ENCODE measurements at regions of chr6 and their contacts with region 1.

Region 1: DNA sequence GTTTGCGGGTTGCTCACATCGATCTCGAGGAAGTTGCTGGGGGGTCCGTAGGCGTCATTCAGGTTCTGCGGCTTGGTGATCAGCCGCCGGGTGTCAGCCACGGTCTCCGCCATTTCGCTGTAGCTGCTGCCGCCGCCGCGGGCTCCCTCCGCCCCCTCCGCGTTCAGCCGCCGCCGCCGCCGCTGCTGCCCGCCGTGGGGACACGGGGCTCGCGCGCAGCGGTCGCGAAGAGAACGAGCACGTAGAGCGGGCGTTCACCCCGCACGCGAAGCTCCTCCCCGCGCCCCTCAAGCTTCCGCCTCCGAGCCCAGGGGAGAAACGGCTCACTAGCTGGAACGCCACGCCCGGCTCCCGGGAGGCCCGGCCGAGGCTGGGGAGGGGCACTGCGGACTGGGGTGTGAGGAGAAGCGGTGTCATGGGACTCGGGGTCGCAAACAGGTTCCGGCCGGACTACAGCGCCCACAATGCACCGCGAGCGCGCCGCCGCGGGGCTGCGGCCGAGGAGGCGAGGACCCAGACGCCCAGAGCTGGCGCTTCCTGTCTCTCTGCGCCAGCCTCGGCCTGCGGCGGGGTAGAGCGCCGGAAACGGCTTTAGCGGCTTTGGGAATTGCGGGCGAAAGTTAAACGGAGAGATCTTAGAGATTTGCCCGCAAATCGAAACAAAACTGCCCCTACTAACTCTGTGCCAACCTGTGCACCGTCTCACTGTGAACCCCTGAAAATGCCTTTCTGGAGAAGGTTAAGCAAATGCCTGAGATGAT is at the start of gene SNX3:
- DNase-seq: peak; percentile 94
- H3K4me3 Mint-ChIP-seq: peak within 1 kb of the TSS; percentile 79
- H3K27ac Mint-ChIP-seq: peak within 1 kb of the TSS; percentile 88
- H3K4me1 Mint-ChIP-seq: peaks cover 19% of the 10 kb centered on the region
- H3K27me3 Mint-ChIP-seq: no peaks in the 10 kb centered on the region
- total RNA-seq, gene SNX3: 78.6 to 80.4 TPM

Region 2: DNA sequence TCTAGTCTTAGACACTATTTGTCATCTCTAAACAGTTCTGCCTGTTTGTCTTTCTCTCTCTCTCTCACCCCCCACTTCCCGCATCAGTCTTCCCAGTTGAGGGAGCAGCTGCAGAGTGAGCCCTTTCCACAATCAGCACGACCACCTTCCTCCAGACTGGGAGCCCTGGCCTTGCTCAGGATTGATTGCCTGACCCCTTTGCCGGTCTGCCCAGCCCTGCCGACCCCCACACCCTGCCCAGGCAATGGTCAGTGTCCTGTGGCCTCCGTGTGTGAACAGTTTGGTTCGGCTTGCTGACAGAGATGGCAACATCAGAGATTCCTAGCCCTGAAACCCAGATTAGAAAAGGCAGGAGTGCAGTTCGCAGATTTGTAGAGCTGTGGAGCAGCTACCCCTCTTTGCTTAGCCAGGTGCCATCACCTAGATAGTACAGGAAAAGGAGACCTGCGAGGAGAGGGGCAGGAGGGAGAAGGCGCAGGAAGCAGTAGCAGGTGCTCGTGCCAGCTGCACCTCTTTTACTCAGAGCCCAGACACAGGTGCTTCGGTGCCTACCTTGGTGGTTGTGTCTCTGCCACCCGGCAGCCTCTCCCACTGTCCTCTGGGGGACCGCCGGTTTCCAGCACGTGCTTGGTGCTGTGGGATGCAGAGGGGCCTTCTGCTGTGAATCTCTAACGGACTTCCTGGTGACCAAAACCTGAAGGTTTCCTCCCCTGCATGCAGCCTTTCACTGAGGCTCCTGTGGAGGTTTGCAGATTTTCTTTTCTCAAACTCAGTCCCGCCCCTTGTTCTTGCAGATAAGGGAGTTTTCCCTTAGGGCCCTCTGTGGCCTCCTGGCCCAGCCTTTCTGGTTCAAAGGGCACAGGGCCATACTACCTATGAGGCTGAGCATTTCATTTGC is 529.3 kb before region 1 on chr6:
- CTCF ChIA-PET with region 1: no interaction called
- POLR2A ChIA-PET with region 1: no interaction called
- intact Hi-C with region 1: loop called (anchors 10 kb)
- DNase-seq: peak; percentile 47
- H3K4me3 Mint-ChIP-seq: peak overlapping the region; percentile 75
- H3K27ac Mint-ChIP-seq: peak overlapping the region; percentile 74
- H3K4me1 Mint-ChIP-seq: peaks cover 83% of the 10 kb centered on the region
- H3K27me3 Mint-ChIP-seq: no peaks in the 10 kb centered on the region

Region 3: DNA sequence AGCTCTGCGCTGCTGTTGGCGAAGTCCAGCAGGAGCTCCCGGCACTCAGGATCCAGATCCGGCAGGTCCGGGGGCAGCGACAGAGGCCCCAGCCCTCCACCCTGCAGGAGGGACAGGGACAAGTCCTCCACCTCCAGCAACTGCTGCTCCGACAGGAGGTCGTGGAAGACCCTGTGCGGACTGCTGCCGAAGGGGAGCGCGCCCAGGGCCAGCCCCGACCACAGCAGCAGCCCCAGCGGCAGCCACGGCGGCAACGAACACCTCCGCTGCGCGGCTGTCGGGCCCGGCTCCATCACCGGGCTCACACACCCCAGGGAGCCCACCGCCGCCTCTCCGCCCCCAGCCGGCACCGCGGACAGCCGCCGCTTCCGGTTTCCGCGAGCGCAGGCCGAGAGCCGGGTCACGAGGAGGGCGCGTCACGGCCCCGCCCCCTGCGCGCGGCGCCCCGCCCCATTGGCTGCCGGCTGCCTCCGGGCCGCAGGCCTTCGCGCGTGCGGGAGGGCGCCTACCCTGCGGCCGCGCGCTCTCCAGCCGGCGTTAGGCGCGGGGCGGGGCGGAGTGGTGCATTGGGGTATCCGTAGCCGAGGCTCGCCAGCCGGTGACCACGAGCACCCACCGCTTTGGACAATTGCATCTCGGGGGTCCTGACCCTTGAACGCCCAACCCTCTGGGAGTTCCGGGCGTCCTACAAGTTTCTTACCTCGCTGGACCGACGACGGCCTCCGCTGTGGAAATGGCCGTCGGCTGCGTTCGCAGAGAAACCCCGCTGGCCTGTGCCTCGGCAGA is 186.4 kb before region 1 on chr6 and contains the start of gene OSTM1:
- CTCF ChIA-PET with region 1: no interaction called
- POLR2A ChIA-PET with region 1: no interaction called
- intact Hi-C with region 1: loop called (anchors 1 kb)
- DNase-seq: peak; percentile 95
- H3K4me3 Mint-ChIP-seq: peak within 1 kb of the TSS; percentile 80
- H3K27ac Mint-ChIP-seq: peak within 1 kb of the TSS; percentile 65
- H3K4me1 Mint-ChIP-seq: peaks cover 24% of the 10 kb centered on the region
- H3K27me3 Mint-ChIP-seq: no peaks in the 10 kb centered on the region
- total RNA-seq, gene OSTM1: 14.0 to 16.3 TPM

Region 4: DNA sequence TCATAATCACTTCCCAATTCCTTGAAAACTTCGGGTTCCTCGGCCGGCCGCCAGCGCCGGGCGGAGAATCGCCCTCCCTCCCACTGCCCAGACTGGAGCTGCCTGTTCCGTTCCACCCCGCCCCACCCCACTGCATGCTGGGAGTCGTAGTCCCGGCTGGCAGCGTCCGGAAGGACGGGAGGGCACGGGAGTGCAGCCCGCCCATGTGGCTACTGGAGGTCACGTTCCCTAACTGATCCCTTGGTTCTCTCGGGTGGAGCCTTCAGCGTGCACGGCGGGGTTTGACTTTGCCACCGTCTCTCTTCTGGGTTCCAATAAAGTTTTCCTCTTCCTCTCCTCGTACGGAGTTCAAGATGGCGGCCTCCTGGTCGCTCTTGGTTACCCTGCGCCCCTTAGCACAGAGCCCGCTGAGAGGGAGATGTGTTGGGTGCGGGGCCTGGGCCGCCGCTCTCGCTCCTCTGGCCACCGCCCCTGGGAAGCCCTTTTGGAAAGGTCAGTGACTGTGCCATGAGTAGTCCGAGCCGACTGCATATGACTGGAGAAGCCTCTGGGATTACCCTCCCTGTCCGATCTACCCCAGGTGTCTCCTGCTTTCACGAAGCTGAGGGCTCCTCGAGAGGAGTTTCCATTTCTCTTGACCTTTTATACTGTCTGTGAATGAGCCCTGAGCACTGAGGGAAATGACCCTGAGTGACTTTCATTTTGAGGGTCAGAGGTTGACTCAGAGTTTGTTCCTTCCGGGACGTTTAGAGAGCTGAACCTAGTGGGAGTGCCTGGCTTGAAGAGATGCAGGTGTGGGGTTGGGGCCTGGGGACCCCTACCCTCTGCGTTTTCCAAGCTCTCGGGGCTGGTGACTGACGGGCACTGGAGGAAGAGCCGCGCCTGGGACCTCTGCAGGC is 34.0 kb after region 1 on chr6 and contains the start of gene AFG1L:
- CTCF ChIA-PET with region 1: interaction called, 4 read pairs
- POLR2A ChIA-PET with region 1: interaction called, 26 read pairs
- intact Hi-C with region 1: loop called (anchors 1 kb)
- DNase-seq: peak; percentile 92
- H3K4me3 Mint-ChIP-seq: peak within 1 kb of the TSS; percentile 94
- H3K27ac Mint-ChIP-seq: peak within 1 kb of the TSS; percentile 98
- H3K4me1 Mint-ChIP-seq: peaks cover 18% of the 10 kb centered on the region
- H3K27me3 Mint-ChIP-seq: no peaks in the 10 kb centered on the region
- total RNA-seq, gene AFG1L: 5.3 to 6.3 TPM

Region 5: GRCh38 chr6:108321253-108321740 is 60.3 kb after region 1 on chr6:
- CTCF ChIA-PET with region 1: no interaction called
- POLR2A ChIA-PET with region 1: no interaction called
- intact Hi-C with region 1: no loop called
- DNase-seq: no peak
- H3K4me3 Mint-ChIP-seq: no peak overlapping the region
- H3K27ac Mint-ChIP-seq: no peak overlapping the region
- H3K4me1 Mint-ChIP-seq: no peaks in the 10 kb centered on the region
- H3K27me3 Mint-ChIP-seq: no peaks in the 10 kb centered on the region

Region 6: DNA sequence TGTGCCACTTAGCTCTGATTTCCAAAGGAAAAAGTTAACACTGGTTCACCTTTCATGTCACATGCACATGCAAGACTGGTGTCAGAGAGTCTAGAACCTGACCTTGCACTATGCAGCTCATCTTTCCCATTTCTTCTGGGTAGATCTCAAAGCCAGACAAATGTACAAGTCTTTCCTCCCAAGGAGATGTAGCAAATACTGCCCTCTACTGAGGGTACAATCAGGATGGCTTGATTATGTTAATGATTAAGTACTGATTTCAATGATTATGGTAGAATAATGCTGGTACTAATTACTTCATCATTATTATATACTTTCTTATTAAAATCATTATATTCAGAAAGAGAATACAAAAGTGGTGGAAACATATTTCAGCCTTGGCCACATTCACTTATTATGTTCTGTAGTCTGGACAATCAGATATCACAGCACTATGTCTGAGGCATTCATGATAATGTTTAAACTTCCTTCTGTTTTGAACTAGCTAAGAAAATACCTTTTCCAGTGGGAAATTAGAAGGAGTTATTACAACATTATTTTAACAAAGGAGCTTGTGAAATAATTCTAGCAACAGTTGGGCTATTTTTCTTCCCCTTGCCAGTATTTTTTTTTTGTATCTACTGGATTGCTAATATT is 231.3 kb after region 1 on chr6:
- CTCF ChIA-PET with region 1: interaction called, 23 read pairs
- POLR2A ChIA-PET with region 1: no interaction called
- intact Hi-C with region 1: loop called (anchors 10 kb)
- DNase-seq: no peak
- H3K4me3 Mint-ChIP-seq: no peak overlapping the region
- H3K27ac Mint-ChIP-seq: no peak overlapping the region
- H3K4me1 Mint-ChIP-seq: no peaks in the 10 kb centered on the region
- H3K27me3 Mint-ChIP-seq: no peaks in the 10 kb centered on the region

Measured in activated CD4-positive, alpha-beta memory T cell treated with anti-CD3 and anti-CD28 coated beads for 36 hours (primary cell).